ENCODE measurements at regions of chr3 and their contacts with region 1.

Region 1: GRCh38 chr3:171459942-171460724 is at the start of gene TNIK:
- DNase-seq: peak; percentile 81
- ATAC-seq: peak; percentile 90
- H3K4me3 ChIP-seq: peak within 1 kb of the TSS; percentile 71 to 82
- H3K27ac ChIP-seq: peak within 1 kb of the TSS; percentile 71
- H3K4me1 ChIP-seq: peaks cover 12 to 30% of the 10 kb centered on the region in 2 experiments; a peak in 3 of 4 replicates
- H3K27me3 ChIP-seq: no peaks in the 10 kb centered on the region
- CTCF ChIP-seq: peak in 2 of 3 experiments; percentile 16 to 54; a peak in 2 of 6 replicates
- POLR2A ChIP-seq: peak; percentile 25
- RAD21 ChIP-seq: no peak
- total RNA-seq, gene TNIK: 24.1 TPM

Region 2: DNA sequence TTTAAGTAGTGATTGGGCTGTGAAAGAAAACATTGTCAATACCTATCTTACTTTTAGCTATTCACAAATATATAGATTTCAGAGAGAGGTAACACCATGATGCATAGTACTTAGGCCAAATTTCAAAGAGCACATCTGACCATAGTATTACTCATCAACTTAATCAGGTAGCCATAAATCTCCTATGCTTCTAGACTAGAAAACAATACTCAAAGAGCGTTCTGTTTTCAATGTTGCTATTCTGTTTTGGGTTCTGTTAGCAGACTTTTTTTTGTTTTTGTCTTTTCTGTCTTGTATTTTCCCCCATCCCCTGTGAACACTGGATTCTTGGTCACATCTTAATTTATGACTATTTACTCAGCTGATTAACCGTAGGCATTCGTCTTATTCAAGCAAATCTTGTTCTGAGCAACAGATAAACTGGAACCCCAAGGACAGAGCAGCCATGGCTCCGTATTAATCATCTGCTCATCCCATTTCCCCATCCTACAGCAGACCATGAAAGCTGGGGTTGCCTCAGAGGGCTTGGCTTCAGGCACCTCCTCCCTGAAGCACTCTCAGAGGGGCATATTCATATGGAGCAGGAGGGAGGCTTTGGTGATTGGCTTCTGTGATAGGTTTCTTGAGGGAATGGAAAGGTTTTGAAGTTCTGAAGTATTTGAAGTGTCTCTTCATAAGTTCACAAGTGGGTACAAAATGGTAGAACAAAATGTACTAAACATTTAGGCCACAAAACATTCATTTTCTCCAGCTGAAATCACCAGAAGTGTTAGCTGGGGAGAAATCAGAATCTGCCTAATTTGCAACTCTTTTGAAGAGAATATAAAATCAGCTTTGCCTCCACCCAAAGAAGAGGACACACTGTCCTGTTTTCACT is 105.2 kb before region 1 on chr3:
- CTCF ChIA-PET with region 1: no interaction called
- POLR2A ChIA-PET with region 1: interaction called, 5 read pairs
- RAD21 ChIA-PET with region 1: no interaction called
- intact Hi-C with region 1: loop called (anchors 1 kb)
- DNase-seq: peak; percentile 83
- ATAC-seq: peak; percentile 74
- H3K4me3 ChIP-seq: peak overlapping the region in 1 of 2 experiments; percentile 47; a peak in 3 of 4 replicates
- H3K27ac ChIP-seq: peak overlapping the region; percentile 66
- H3K4me1 ChIP-seq: peaks cover 55 to 62% of the 10 kb centered on the region in 2 experiments
- H3K27me3 ChIP-seq: no peaks in the 10 kb centered on the region
- CTCF ChIP-seq: no peak
- POLR2A ChIP-seq: no peak
- RAD21 ChIP-seq: no peak

Region 3: GRCh38 chr3:171417813-171418212 is 42.3 kb before region 1 on chr3:
- CTCF ChIA-PET with region 1: no interaction called
- POLR2A ChIA-PET with region 1: no interaction called
- RAD21 ChIA-PET with region 1: no interaction called
- intact Hi-C with region 1: no loop called
- DNase-seq: no peak
- ATAC-seq: no peak
- H3K4me3 ChIP-seq: no peak overlapping the region
- H3K27ac ChIP-seq: no peak overlapping the region
- H3K4me1 ChIP-seq: peaks cover 0 to 17% of the 10 kb centered on the region in 2 experiments; a peak in 1 of 4 replicates
- H3K27me3 ChIP-seq: no peaks in the 10 kb centered on the region
- CTCF ChIP-seq: no peak
- POLR2A ChIP-seq: no peak
- RAD21 ChIP-seq: no peak

Region 4: DNA sequence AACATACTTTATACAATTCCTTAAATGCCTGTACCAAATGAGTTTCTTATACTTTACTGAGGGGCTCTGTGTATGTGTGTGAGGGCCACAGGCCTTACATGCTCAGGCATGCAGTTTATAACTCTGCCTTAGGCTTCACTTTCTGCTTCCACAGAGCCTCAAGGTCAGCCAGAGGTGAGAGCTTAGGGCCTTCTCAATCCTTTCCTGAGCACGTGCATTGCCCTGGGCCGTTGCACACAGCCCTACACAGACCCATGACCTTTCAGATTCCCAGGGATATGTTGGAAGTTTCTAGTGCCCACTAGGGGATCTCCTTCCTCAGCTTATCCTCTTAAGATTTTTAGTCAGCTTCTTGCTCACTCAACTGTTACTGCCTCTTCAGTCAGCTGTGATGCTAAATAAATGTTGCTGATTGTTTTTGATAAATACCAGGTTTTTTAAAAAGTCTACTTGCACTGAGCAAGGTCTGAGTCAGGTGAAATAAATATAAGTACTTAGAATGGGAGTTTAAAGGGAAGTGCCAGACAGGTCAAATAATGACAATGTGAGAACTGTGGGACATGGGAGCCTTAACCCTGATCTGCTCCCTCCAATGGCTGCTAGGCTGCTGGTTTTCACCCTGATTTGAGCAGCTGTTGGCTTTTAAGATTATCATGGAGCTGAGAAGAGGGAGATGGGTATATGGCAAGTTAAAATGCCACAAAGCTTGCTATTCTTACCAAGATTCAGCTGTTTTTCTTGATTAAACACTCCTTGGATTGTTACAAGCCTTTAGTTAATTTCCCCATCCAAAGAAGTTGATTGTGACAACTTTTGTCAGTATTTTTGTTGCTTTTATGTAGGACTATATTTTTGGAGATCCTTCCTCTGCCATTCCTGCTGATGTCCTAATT is 180.6 kb after region 1 on chr3:
- CTCF ChIA-PET with region 1: no interaction called
- POLR2A ChIA-PET with region 1: no interaction called
- RAD21 ChIA-PET with region 1: no interaction called
- intact Hi-C with region 1: no loop called
- DNase-seq: no peak
- ATAC-seq: peak; percentile 83
- H3K4me3 ChIP-seq: no peak overlapping the region
- H3K27ac ChIP-seq: peak overlapping the region; percentile 20; the same call in 1 of the 2 replicates
- H3K4me1 ChIP-seq: peaks cover 5 to 6% of the 10 kb centered on the region in 2 experiments; a peak in 3 of 4 replicates
- H3K27me3 ChIP-seq: no peaks in the 10 kb centered on the region
- CTCF ChIP-seq: peak in 2 of 3 experiments; percentile 11 to 33; a peak in 1 of 6 replicates
- POLR2A ChIP-seq: no peak
- RAD21 ChIP-seq: peak; percentile 28; the same call in 1 of the 2 replicates

Measured in HCT116 (cell line).